ENCODE measurements at regions of chr2 and their contacts with region 1.

Region 1: GRCh38 chr2:241844066-241844728 is 14.5 kb downstream of the PDCD1 start:
- DNase-seq: peak; percentile 53 to 85 (median 75)
- H3K4me3 ChIP-seq: peak overlapping the region; percentile 41
- H3K4me3 Mint-ChIP-seq: peak overlapping the region; percentile 68 to 91 (median 80)
- H3K27ac ChIP-seq: peak overlapping the region; percentile 47
- H3K27ac Mint-ChIP-seq: peak overlapping the region in 7 of 8 donors; percentile 43 to 88 (median 78)
- H3K4me1 ChIP-seq: peaks cover 23% of the 10 kb centered on the region
- H3K4me1 Mint-ChIP-seq: peaks cover 34 to 48% (median 42%) of the 10 kb centered on the region in 3 donors
- H3K27me3 ChIP-seq: no peaks in the 10 kb centered on the region
- H3K27me3 Mint-ChIP-seq: no peaks in the 10 kb centered on the region

Region 2: GRCh38 chr2:241584423-241584822 is 259.8 kb before region 1 on chr2:
- CTCF ChIA-PET with region 1: no interaction called
- POLR2A ChIA-PET with region 1: no interaction called
- DNase-seq: no peak
- H3K4me3 ChIP-seq: no peak overlapping the region
- H3K4me3 Mint-ChIP-seq: no peak overlapping the region
- H3K27ac ChIP-seq: no peak overlapping the region
- H3K27ac Mint-ChIP-seq: no peak overlapping the region
- H3K4me1 ChIP-seq: no peaks in the 10 kb centered on the region
- H3K4me1 Mint-ChIP-seq: no peaks in the 10 kb centered on the region
- H3K27me3 ChIP-seq: no peaks in the 10 kb centered on the region
- H3K27me3 Mint-ChIP-seq: no peaks in the 10 kb centered on the region

Region 3: GRCh38 chr2:241859436-241860183 is 15.4 kb after region 1 on chr2:
- CTCF ChIA-PET with region 1: interaction called, 4 read pairs
- POLR2A ChIA-PET with region 1: interaction called, 10 read pairs
- DNase-seq: peak in 2 of 5 donors; percentile 44 to 68
- H3K4me3 ChIP-seq: peak overlapping the region; percentile 60
- H3K4me3 Mint-ChIP-seq: peak overlapping the region; percentile 89 to 99 (median 92)
- H3K27ac ChIP-seq: peak overlapping the region; percentile 28
- H3K27ac Mint-ChIP-seq: peak overlapping the region; percentile 89 to 98 (median 97)
- H3K4me1 ChIP-seq: peaks cover 72% of the 10 kb centered on the region
- H3K4me1 Mint-ChIP-seq: peaks cover 55 to 85% (median 66%) of the 10 kb centered on the region in 3 donors
- H3K27me3 ChIP-seq: no peaks in the 10 kb centered on the region
- H3K27me3 Mint-ChIP-seq: no peaks in the 10 kb centered on the region